ENCODE measurements at regions of chr4 and their contacts with region 1.

Region 1: GRCh38 chr4:4488405-4489404 is 53.1 kb downstream of the STX18 start:
- DNase-seq: peak; percentile 84
- H3K4me3 Mint-ChIP-seq: no peak overlapping the region
- H3K27ac Mint-ChIP-seq: no peak overlapping the region
- H3K4me1 Mint-ChIP-seq: peaks cover 11% of the 10 kb centered on the region
- H3K27me3 Mint-ChIP-seq: no peaks in the 10 kb centered on the region

Region 2: DNA sequence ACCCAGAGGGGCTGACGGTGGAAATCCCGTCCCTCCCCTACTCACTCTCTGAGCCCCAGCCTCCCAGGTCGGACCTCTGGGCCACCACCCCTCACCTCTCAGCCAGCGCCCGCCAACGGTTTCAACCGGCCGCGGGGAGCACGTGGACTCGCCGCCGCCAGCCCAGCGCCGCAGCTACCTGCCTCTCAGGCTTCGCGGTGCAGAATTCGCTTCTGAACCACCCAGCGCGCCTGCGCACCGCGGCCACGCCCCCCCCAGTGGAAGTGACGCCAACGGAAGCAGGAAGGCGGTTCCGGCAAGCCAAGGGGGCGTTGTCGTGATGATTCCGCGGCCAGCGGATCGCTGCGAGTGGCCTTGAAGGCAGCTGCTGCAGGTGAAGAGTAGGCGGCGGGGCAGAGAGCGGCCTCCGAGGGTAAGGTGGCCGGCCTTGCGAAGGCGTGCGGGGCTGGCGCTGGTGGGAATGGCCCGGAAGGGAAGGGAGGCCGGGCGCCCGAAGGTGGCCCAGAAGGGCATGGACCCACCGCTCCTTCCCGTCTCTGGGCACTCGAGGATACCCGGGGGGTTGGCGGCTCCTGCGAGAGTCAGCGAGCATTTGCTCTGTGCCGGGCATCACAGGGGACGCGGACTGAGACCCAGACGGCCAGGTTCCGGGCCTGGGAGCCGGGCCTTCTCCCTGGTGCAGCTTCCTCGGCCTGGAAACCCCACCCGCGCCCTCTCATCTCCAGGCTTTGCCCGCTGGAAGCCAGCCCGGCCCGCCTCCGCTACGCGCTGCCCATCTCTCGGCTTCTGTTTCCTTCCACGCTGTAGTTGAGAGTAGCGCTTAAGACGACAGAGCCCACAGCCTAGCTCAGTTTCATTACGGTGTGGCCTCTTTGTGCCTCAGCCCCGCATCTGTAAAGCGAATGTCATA is 198.5 kb before region 1 on chr4 and contains the starts of genes LYAR and ZBTB49:
- CTCF ChIA-PET with region 1: no interaction called
- POLR2A ChIA-PET with region 1: no interaction called
- intact Hi-C with region 1: no loop called
- DNase-seq: peak; percentile 98
- H3K4me3 Mint-ChIP-seq: peak within 1 kb of the TSS; percentile 95
- H3K27ac Mint-ChIP-seq: peak within 1 kb of the TSS; percentile 60
- H3K4me1 Mint-ChIP-seq: peaks cover 53% of the 10 kb centered on the region
- H3K27me3 Mint-ChIP-seq: no peaks in the 10 kb centered on the region
- total RNA-seq, gene LYAR: 49.7 to 54.0 TPM
- total RNA-seq, gene ZBTB49: 4.3 to 4.6 TPM

Region 3: DNA sequence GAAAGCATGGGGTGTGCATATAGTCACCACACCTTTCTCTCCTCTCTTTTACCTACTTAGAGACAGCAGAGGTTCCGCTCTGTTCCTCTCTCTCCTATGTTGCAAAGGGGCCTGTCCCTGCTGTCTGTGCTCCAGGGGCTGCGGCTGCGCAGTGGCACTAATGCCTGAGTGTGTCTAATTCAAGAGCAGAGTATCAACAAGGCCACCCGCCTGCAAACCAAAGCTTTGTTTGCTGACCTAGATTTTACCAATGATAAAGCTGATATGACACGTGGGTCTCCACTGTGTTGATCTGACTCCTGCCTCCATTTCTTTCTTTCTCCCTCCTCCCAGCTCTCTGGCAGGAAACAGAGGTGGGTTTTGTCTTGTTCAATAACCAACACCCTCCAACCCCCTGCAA is 26.9 kb before region 1 on chr4:
- CTCF ChIA-PET with region 1: interaction called, 4 read pairs
- POLR2A ChIA-PET with region 1: no interaction called
- intact Hi-C with region 1: loop called (anchors 2 kb)
- DNase-seq: peak; percentile 80
- H3K4me3 Mint-ChIP-seq: peak overlapping the region; percentile 42
- H3K27ac Mint-ChIP-seq: peak overlapping the region; percentile 74
- H3K4me1 Mint-ChIP-seq: peaks cover 43% of the 10 kb centered on the region
- H3K27me3 Mint-ChIP-seq: no peaks in the 10 kb centered on the region

Region 4: DNA sequence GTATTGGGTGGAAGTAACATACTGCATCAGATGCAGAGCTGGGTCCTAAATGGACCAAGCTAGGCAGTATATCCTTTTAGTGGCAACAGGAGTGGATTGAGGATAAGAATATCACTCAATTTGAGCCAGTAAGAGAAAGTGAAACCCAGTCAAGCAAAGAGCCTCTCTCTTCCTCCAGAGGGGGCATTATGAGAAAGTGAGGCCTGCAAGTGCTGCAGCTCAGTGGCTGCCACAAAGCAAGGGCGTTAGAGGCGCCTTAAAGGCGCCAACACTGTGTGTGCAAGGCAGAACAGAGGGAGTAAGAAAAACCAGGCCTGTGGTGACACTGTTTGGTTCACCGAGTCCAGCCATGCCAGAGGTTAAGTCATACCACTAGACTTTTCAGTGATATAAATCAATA is 35.7 kb after region 1 on chr4:
- CTCF ChIA-PET with region 1: interaction called, 7 read pairs
- POLR2A ChIA-PET with region 1: no interaction called
- intact Hi-C with region 1: loop called (anchors 1 kb)
- DNase-seq: peak; percentile 57
- H3K4me3 Mint-ChIP-seq: no peak overlapping the region
- H3K27ac Mint-ChIP-seq: no peak overlapping the region
- H3K4me1 Mint-ChIP-seq: peaks cover 29% of the 10 kb centered on the region
- H3K27me3 Mint-ChIP-seq: no peaks in the 10 kb centered on the region

Region 5: DNA sequence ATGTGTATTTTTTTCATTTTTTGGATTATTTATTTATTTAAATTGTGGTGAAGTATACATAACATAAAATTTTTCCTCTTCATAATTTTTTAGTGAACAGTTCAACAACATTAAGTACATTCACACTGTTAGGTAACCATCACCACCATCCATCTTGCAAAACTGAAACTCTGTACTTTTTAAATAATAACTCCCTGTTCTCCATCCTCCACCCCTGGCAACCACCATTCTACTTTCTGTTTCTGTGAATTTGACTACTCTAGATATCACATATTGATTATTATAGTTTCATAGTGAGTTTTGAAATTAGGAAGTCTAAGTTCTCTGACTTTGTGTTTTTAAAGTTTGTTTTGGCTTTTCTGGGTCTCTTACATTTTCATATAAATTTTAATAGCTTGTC is 142.4 kb after region 1 on chr4:
- CTCF ChIA-PET with region 1: no interaction called
- POLR2A ChIA-PET with region 1: no interaction called
- intact Hi-C with region 1: loop called (anchors 10 kb)
- DNase-seq: no peak
- H3K4me3 Mint-ChIP-seq: no peak overlapping the region
- H3K27ac Mint-ChIP-seq: no peak overlapping the region
- H3K4me1 Mint-ChIP-seq: peaks cover 7% of the 10 kb centered on the region
- H3K27me3 Mint-ChIP-seq: no peaks in the 10 kb centered on the region

Region 6: GRCh38 chr4:4852591-4853375 is 364.1 kb after region 1 on chr4:
- CTCF ChIA-PET with region 1: interaction called, 3 read pairs
- POLR2A ChIA-PET with region 1: no interaction called
- intact Hi-C with region 1: loop called (anchors 2 kb)
- DNase-seq: peak; percentile 66
- H3K4me3 Mint-ChIP-seq: peak overlapping the region; percentile 60
- H3K27ac Mint-ChIP-seq: no peak overlapping the region
- H3K4me1 Mint-ChIP-seq: peaks cover 30% of the 10 kb centered on the region
- H3K27me3 Mint-ChIP-seq: peaks cover 63% of the 10 kb centered on the region

Region 7: GRCh38 chr4:4995103-4995907 is 506.6 kb after region 1 on chr4:
- CTCF ChIA-PET with region 1: no interaction called
- POLR2A ChIA-PET with region 1: no interaction called
- intact Hi-C with region 1: loop called (anchors 5 kb)
- DNase-seq: peak; percentile 57
- H3K4me3 Mint-ChIP-seq: no peak overlapping the region
- H3K27ac Mint-ChIP-seq: no peak overlapping the region
- H3K4me1 Mint-ChIP-seq: no peaks in the 10 kb centered on the region
- H3K27me3 Mint-ChIP-seq: peaks cover 12% of the 10 kb centered on the region

Measured in activated CD4-positive, alpha-beta memory T cell treated with anti-CD3 and anti-CD28 coated beads for 36 hours (primary cell).